AG04449 (cell line): ENCODE measurements at regions of chr6 and their contacts with region 1.

Region 1: DNA sequence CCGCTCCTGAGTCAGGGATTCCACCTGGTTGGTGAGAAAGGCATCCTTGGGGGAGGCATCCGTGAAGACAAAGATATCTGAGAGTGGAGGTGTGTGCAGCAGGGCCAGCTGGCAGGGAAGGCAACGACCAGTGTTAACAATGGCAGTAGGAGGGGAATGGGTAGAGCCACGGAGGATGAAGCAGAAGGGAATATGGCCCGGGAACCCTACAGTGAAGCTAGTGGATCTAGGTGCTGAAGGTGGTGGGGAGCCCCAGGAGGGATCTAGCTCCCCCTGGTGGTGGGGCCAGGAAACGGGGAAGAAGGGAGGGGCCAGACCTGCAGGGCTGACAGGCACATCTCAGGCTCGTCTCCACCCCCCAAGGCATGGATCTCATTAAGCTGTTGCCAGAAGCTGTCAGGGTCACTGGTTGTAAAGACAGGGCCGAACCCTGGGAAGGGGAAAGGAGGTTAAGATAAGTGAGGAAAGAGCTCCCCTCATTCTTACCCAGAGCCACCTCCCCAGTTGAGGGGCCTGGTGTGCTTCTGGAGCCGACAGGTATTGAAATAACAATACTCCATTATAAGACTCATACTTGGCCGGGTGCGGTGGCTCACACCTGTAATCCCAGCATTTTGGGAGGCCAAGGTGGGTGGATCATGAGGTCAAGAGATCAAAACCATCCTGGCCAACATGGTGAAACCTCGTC is 7.3 kb downstream of the VWA7 start:
- DNase-seq: no peak
- H3K4me3 ChIP-seq: no peak overlapping the region
- CTCF ChIP-seq: peak; percentile 78

Region 2: DNA sequence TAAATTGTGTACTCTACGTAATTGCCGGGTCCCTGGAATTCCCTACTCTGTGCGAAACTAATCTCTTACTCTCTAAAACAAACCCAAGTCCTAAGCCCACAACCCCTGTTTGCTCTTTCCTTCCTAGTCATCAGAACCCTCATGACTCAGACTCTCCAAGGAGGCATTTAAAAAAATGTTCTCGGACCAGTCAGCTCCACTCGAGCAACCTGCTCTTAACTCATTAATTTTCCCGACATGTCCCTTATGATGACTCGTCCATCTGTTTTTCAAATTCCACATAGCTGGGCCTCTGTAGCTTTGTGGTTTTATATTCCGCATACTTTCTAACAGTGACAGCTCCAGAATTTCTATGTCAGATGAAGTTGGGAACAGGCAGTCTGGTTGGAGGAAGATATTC is 762.1 kb before region 1 on chr6:
- CTCF ChIA-PET with region 1: no interaction called
- POLR2A ChIA-PET with region 1: no interaction called
- DNase-seq: peak; percentile 70
- H3K4me3 ChIP-seq: no peak overlapping the region
- CTCF ChIP-seq: no peak

Region 3: DNA sequence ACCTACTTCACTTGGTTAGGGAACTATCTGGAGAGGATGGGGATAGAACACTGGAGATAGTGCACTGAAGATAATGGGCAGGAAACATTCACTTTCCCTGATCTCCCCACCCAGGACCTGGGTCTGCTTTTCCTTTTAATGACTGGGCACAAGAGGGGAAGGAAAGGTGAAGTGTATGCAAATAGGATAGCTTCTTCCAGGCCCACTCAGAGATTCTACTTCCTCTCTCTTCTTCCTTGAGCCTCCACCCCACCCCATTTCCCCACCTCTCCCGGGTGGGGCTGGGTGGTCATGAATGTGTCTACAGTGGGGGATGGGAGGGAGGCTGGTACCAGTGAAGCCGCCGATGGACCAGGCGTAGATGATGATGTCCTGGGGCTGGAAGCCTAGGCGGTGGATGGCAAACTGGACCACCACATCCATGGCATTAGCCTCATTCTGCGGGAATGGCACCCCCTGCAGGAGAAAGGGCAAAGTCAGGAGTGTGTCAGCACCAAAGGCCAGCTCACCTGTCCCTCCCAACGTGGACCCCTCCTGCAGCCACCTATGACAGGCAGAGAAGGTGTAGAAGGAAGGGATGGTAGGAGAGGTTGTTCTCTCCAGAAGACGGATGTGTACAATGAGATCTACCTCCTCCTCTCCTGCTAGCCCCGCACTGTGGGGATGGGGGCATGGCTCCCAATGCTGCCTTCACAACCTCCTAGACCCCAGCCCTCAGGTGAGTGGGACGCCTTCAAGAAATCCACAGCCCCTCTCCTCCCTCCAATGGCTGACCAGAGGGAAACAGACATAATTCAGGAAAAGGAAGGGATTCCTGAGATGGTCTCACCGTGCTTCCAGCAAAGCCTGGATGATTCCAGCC is 80.3 kb before region 1 on chr6:
- CTCF ChIA-PET with region 1: interaction called, 10 read pairs
- POLR2A ChIA-PET with region 1: no interaction called
- DNase-seq: no peak
- H3K4me3 ChIP-seq: no peak overlapping the region
- CTCF ChIP-seq: peak; percentile 48

Region 4: DNA sequence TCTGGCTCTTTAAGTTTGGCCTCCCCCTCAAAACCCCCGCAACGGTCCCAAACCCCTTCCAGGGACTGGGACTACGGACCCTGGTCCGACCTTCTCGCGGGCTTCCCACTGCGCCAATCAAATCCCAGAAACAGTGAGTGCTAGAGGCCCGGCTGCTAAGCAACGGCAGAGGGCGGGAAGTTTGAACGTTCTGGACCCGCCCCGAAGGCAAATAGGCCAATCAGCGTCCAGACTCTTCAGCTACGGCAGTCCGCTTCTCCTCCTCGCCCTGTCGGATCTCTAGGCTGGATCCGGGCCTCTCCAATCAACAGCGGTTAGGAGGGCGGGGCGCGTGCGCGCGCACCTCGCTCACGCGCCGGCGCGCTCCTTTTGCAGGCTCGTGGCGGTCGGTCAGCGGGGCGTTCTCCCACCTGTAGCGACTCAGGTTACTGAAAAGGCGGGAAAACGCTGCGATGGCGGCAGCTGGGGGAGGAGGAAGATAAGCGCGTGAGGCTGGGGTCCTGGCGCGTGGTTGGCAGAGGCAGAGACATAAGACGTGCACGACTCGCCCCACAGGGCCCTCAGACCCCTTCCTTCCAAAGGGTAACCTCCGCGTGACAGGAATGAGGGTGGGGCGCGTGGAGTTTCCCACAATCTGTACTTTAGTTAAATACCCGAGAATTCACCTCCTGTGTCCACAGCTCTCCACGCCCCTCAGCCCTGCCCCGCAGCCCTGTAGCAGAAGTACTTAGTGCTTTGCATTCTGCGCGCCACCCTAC is 30.0 kb before region 1 on chr6 and contains the start of gene MSH5:
- CTCF ChIA-PET with region 1: interaction called, 14 read pairs
- POLR2A ChIA-PET with region 1: interaction called, 3 read pairs
- DNase-seq: peak; percentile 91
- H3K4me3 ChIP-seq: peak within 1 kb of the TSS; percentile 95
- CTCF ChIP-seq: no peak

Region 5: DNA sequence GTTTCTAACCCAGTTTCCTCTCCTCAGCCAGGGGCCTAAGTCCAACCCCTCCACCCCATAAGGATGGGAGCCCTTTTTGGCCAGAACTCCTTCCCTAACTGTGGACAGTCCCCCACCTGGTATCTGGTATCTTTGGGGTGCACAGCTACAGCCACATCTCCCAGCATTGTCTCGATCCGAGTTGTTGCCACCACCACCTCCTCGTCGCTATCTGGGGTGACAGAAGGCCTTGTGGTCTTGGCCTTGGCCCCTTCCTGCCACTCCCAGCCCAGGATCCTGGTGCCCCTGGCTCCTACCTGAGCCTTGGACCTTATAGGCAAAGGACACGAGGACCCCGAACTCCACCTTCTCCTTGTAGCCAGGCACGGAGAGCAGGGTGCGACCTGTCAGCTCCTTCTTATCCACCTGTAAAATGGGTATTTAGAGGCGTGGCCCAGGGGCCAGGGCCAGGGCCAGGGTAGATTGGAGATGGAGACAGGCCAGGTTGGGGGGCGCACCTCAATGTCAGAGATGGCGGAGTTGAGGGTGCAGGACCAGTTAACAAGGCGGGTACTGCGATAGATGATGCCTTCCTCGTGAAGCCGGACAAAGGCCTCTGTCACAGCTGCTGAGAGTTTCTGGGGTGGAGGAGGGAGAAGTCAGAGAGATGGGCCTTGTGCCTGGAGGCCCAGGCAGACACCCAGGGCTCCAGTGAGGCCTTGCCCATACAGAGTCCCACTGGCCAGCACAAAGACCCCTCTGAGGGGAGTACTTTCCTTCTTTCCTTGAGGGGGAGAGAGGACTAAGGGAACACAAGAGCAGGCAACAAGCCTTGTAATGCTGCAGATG is 14.5 kb after region 1 on chr6:
- CTCF ChIA-PET with region 1: interaction called, 21 read pairs
- POLR2A ChIA-PET with region 1: no interaction called
- DNase-seq: no peak
- H3K4me3 ChIP-seq: no peak overlapping the region
- CTCF ChIP-seq: no peak

Region 6: DNA sequence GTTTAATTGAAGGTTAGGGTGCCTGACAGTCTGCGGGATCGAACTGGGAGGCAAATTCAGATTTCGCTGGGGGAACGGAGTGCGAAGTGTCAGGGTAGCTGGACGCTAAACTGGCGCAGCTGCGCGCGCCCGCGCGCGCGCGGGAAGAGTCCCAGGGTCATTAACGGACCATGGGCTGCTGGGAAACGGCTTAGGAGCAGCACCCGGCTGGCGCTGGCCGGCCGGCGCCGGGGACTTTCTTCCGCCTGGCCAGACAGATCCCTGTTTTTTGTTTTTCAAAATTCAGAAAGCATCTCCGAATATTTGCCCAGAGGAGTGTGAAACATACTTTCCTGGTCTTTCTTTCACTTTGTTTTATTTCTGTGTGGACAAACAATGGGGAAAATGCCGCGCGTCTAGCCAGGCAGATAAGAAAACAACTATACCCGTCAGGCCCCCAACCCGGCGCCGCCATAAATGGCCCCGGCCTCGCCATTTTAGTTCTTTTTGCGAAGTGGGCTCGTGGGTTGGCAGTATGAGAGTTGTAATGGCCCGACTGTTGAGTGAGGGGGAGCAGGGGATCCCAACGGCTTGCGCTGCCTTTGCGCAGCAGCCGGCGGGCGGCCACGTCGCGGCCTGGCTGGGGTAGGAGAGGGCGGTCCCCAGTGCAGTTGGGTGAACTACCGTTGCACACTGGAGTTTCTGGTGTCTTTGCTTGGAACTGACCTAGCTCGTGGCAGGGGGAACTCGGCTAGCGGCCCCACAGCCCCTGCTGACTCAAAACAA is 64.8 kb after region 1 on chr6:
- CTCF ChIA-PET with region 1: interaction called, 29 read pairs
- POLR2A ChIA-PET with region 1: interaction called, 3 read pairs
- DNase-seq: no peak
- H3K4me3 ChIP-seq: peak overlapping the region; percentile 93
- CTCF ChIP-seq: no peak

Region 7: DNA sequence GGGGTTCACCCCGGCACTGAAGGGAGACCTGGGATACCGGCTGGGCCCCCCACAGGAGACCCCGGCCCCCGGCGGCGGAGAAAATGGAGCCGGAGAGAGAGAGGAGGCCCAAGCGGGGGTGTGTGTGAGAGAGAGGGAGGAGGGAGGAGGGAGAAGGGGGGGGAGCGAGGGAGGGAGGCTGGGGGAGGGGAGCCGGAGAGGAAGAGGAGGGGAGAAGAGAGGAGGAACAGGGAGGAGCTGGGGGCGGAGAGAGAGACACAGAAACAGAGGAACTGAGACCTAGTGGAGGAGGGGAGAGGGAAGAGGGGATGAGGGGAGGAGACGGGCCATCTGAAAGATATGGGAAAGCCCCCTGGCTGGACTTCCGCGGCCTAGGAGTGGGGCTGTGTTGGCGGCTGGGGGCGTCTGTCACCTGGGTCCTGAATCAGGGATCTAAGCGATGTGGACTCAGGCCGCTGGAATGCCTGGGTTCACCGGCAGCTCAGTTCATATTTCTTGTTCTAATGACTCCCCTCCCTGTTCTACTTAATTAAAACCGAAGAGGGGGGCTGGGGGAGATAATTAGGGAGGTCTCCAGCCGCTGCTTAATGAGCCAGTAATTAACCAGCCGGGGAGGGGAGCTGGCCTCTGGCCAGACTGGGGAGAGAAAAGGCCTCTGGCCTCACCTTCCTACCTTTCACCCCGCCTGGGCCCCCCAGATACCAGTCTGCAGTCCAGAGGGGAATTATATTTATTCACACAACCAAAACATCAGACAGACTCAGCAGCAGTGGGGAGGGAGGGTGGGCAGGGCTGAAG is 420.4 kb after region 1 on chr6 and contains the start of gene PBX2:
- CTCF ChIA-PET with region 1: no interaction called
- POLR2A ChIA-PET with region 1: no interaction called
- DNase-seq: peak; percentile 67
- H3K4me3 ChIP-seq: peak within 1 kb of the TSS; percentile 77
- CTCF ChIP-seq: no peak